Posterior vena cava (tissue), 2 donors: ENCODE measurements at regions of chr7 and their contacts with region 1.

Region 1: GRCh38 chr7:151091431-151091830 is 5.2 kb downstream of the AGAP3 start:
- DNase-seq: no peak

Region 2: GRCh38 chr7:151046603-151047504 is 44.6 kb before region 1 on chr7:
- intact Hi-C with region 1: loop called in 1 of 2 experiments (anchors 10 kb)
- DNase-seq: no peak

Region 3: GRCh38 chr7:151232091-151232916 is 140.9 kb after region 1 on chr7 and contains the start of gene CHPF2:
- intact Hi-C with region 1: no loop called
- DNase-seq: peak; percentile 98
- total RNA-seq, gene CHPF2: 37.5 to 40.7 TPM